Naive thymus-derived CD4-positive, alpha-beta T cell (primary cell): ENCODE measurements at regions of chr10 and their contacts with region 1.

Region 1: GRCh38 chr10:114541081-114541796 is 116.8 kb downstream of the ABLIM1 start:
- DNase-seq: peak; percentile 38 to 92 (median 88)
- ATAC-seq: peak; percentile 88
- H3K4me3 ChIP-seq: peak overlapping the region; percentile 32
- H3K4me3 Mint-ChIP-seq: peak overlapping the region; percentile 74 to 86 (median 79)
- H3K27ac ChIP-seq: peak overlapping the region; percentile 94
- H3K27ac Mint-ChIP-seq: peak overlapping the region; percentile 94 to 99 (median 99)
- H3K4me1 ChIP-seq: peaks cover 85 to 97% of the 10 kb centered on the region in 2 donors
- H3K4me1 Mint-ChIP-seq: peaks cover 63 to 98% (median 94%) of the 10 kb centered on the region in 7 donors
- H3K27me3 ChIP-seq: no peaks in the 10 kb centered on the region
- H3K27me3 Mint-ChIP-seq: no peaks in the 10 kb centered on the region

Region 2: GRCh38 chr10:113678690-113679462 is 862.4 kb before region 1 on chr10:
- CTCF ChIA-PET with region 1: no interaction called
- POLR2A ChIA-PET with region 1: no interaction called
- intact Hi-C with region 1: loop called in 1 of 2 experiments (anchors 2 kb)
- DNase-seq: peak; percentile 32 to 73 (median 51)
- ATAC-seq: peak; percentile 55
- H3K4me3 ChIP-seq: peak overlapping the region; percentile 96
- H3K4me3 Mint-ChIP-seq: peak overlapping the region; percentile 90 to 100 (median 94)
- H3K27ac ChIP-seq: peak overlapping the region; percentile 70
- H3K27ac Mint-ChIP-seq: peak overlapping the region; percentile 56 to 96 (median 90)
- H3K4me1 ChIP-seq: peaks cover 6 to 11% of the 10 kb centered on the region in 2 donors
- H3K4me1 Mint-ChIP-seq: peaks cover 36 to 44% (median 40%) of the 10 kb centered on the region in 7 donors
- H3K27me3 ChIP-seq: no peaks in the 10 kb centered on the region
- H3K27me3 Mint-ChIP-seq: peaks cover 0 to 17% (median 3%) of the 10 kb centered on the region in 5 donors

Region 3: GRCh38 chr10:114173921-114174694 is 367.1 kb before region 1 on chr10 and contains the start of gene CCDC186:
- CTCF ChIA-PET with region 1: no interaction called
- POLR2A ChIA-PET with region 1: interaction called, 3 read pairs
- intact Hi-C with region 1: loop called in 1 of 2 experiments (anchors 5 kb)
- DNase-seq: peak; percentile 90 to 98 (median 97)
- ATAC-seq: peak; percentile 98
- H3K4me3 ChIP-seq: peak within 1 kb of the TSS; percentile 83
- H3K4me3 Mint-ChIP-seq: peak within 1 kb of the TSS; percentile 88 to 100 (median 96)
- H3K27ac ChIP-seq: peak within 1 kb of the TSS; percentile 88
- H3K27ac Mint-ChIP-seq: peak within 1 kb of the TSS; percentile 92 to 99 (median 98)
- H3K4me1 ChIP-seq: peaks cover 0 to 8% of the 10 kb centered on the region in 2 donors
- H3K4me1 Mint-ChIP-seq: peaks cover 17 to 51% (median 33%) of the 10 kb centered on the region in 7 donors
- H3K27me3 ChIP-seq: no peaks in the 10 kb centered on the region
- H3K27me3 Mint-ChIP-seq: peaks cover 0 to 24% (median 0%) of the 10 kb centered on the region in 5 donors
- total RNA-seq, gene CCDC186: 18.6 to 42.9 (median 34.5) TPM

Region 4: GRCh38 chr10:114499630-114500190 is 41.5 kb before region 1 on chr10:
- CTCF ChIA-PET with region 1: interaction called, 9 read pairs
- POLR2A ChIA-PET with region 1: interaction called, 78 read pairs
- intact Hi-C with region 1: loop called (anchors 1 kb)
- DNase-seq: peak in 8 of 9 donors; percentile 53 to 73 (median 67)
- ATAC-seq: peak; percentile 66
- H3K4me3 ChIP-seq: peak overlapping the region; percentile 2
- H3K4me3 Mint-ChIP-seq: peak overlapping the region; percentile 69 to 79 (median 74)
- H3K27ac ChIP-seq: peak overlapping the region; percentile 78
- H3K27ac Mint-ChIP-seq: peak overlapping the region; percentile 74 to 96 (median 93)
- H3K4me1 ChIP-seq: peaks cover 12 to 81% of the 10 kb centered on the region in 2 donors
- H3K4me1 Mint-ChIP-seq: peaks cover 57 to 100% (median 93%) of the 10 kb centered on the region in 7 donors
- H3K27me3 ChIP-seq: no peaks in the 10 kb centered on the region
- H3K27me3 Mint-ChIP-seq: no peaks in the 10 kb centered on the region

Region 5: GRCh38 chr10:114526504-114527238 is 14.6 kb before region 1 on chr10:
- CTCF ChIA-PET with region 1: interaction called, 283 read pairs
- POLR2A ChIA-PET with region 1: interaction called, 355 read pairs
- intact Hi-C with region 1: loop called (anchors 1 kb)
- DNase-seq: peak; percentile 64 to 97 (median 95)
- ATAC-seq: peak; percentile 94
- H3K4me3 ChIP-seq: peak overlapping the region; percentile 85
- H3K4me3 Mint-ChIP-seq: peak overlapping the region; percentile 88 to 100 (median 98)
- H3K27ac ChIP-seq: peak overlapping the region; percentile 94
- H3K27ac Mint-ChIP-seq: peak overlapping the region; percentile 92 to 100 (median 98)
- H3K4me1 ChIP-seq: peaks cover 35 to 45% of the 10 kb centered on the region in 2 donors
- H3K4me1 Mint-ChIP-seq: peaks cover 34 to 64% (median 53%) of the 10 kb centered on the region in 7 donors
- H3K27me3 ChIP-seq: no peaks in the 10 kb centered on the region
- H3K27me3 Mint-ChIP-seq: peaks cover 0 to 4% (median 0%) of the 10 kb centered on the region in 5 donors

Region 6: GRCh38 chr10:114584419-114584818 is 43.2 kb after region 1 on chr10:
- CTCF ChIA-PET with region 1: no interaction called
- POLR2A ChIA-PET with region 1: no interaction called
- intact Hi-C with region 1: no loop called
- DNase-seq: no peak
- ATAC-seq: no peak
- H3K4me3 ChIP-seq: no peak overlapping the region
- H3K4me3 Mint-ChIP-seq: no peak overlapping the region
- H3K27ac ChIP-seq: no peak overlapping the region
- H3K27ac Mint-ChIP-seq: no peak overlapping the region
- H3K4me1 ChIP-seq: no peaks in the 10 kb centered on the region
- H3K4me1 Mint-ChIP-seq: no peaks in the 10 kb centered on the region
- H3K27me3 ChIP-seq: no peaks in the 10 kb centered on the region
- H3K27me3 Mint-ChIP-seq: peaks cover 0 to 46% (median 0%) of the 10 kb centered on the region in 5 donors

Region 7: GRCh38 chr10:114937962-114938855 is 397.0 kb after region 1 on chr10 and contains the start of gene TRUB1:
- CTCF ChIA-PET with region 1: no interaction called
- POLR2A ChIA-PET with region 1: no interaction called
- intact Hi-C with region 1: loop called (anchors 5 kb)
- DNase-seq: peak; percentile 59 to 91 (median 87)
- ATAC-seq: peak; percentile 100
- H3K4me3 ChIP-seq: peak within 1 kb of the TSS; percentile 87
- H3K4me3 Mint-ChIP-seq: peak within 1 kb of the TSS; percentile 94 to 99 (median 96)
- H3K27ac ChIP-seq: peak within 1 kb of the TSS; percentile 79
- H3K27ac Mint-ChIP-seq: peak within 1 kb of the TSS; percentile 95 to 98 (median 96)
- H3K4me1 ChIP-seq: peaks cover 12 to 23% of the 10 kb centered on the region in 2 donors
- H3K4me1 Mint-ChIP-seq: peaks cover 20 to 43% (median 31%) of the 10 kb centered on the region in 7 donors
- H3K27me3 ChIP-seq: no peaks in the 10 kb centered on the region
- H3K27me3 Mint-ChIP-seq: no peaks in the 10 kb centered on the region
- total RNA-seq, gene TRUB1: 6.8 to 14.6 (median 12.9) TPM